Prostate gland (tissue), 2 donors: ENCODE measurements at regions of chr13 and their contacts with region 1.

Region 1: DNA sequence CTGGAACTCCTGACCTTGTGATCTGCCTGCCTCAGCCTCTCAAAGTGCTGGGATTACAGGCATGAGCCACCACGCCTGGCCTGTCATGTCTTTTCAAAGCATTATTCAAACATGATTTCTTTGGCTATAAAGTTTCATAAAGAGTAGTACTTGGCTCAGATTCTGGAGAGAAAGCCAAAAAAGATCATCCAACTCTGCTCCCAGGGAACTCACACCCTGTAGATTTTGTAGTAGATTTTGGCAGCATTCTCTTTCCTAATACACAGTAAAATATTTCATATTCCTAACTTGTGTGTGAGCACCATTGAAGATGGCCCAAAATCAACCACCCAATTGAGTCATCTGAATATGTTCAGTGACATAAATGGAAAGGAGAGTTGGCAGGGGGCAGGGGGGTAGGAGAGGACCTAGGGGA is 48.4 kb downstream of the CAB39L start:
- DNase-seq: peak; percentile 42
- H3K4me3 ChIP-seq: no peak overlapping the region
- H3K27ac ChIP-seq: peak overlapping the region; percentile 36 to 44
- H3K4me1 ChIP-seq: no peaks in the 10 kb centered on the region
- H3K27me3 ChIP-seq: no peaks in the 10 kb centered on the region
- CTCF ChIP-seq: no peak
- POLR2A ChIP-seq: no peak

Region 2: GRCh38 chr13:49307365-49307764 is 88.1 kb before region 1 on chr13:
- intact Hi-C with region 1: loop called (anchors 2 kb)
- DNase-seq: no peak
- H3K4me3 ChIP-seq: no peak overlapping the region
- H3K27ac ChIP-seq: peak overlapping the region; percentile 78 to 81
- H3K4me1 ChIP-seq: peaks cover 9% of the 10 kb centered on the region
- H3K27me3 ChIP-seq: no peaks in the 10 kb centered on the region
- CTCF ChIP-seq: no peak
- POLR2A ChIP-seq: no peak

Region 3: DNA sequence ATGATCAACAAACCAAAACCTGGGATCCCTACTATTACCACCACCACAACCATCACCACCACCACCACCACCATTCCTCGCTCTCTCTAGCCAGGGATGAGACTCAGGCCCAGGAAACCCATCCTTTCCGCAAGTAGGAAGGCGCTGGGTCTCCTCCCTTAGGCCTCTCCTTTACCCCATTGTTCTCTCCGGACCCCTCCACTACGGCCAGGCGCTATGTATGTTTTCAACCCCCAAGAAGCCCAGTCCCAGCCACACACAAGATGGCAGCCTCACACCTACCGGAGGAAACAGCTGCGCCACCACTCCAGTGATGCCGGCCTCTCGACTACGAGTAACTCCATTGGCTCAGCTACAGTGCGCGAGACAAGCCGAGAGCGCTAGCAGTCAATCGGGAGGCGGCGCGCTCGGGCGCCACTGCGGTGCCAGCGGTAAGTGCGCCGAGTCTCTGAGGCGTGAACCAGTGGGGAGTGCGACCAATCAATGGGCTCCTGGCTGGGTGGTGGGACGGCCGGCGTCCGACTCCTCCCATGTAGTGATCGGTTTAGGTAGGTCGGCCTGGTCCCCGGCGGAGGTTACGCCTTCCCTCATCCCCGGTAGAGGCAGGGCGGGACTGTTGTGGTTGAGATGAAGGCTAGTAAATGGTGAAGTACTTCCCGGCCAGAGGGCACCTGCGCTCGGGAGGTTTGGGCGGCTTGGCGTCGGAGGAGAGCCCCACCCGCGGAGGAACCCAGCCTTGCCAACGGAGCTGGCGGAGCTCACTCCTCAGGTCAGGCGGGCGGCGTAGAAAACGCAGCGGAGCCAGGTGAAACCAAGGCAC is 48.5 kb after region 1 on chr13 and contains the starts of genes CAB39L and SETDB2:
- intact Hi-C with region 1: no loop called
- DNase-seq: peak; percentile 100
- H3K4me3 ChIP-seq: peak within 1 kb of the TSS; percentile 69 to 79
- H3K27ac ChIP-seq: peak within 1 kb of the TSS; percentile 93 to 94
- H3K4me1 ChIP-seq: peaks cover 3% of the 10 kb centered on the region
- H3K27me3 ChIP-seq: no peaks in the 10 kb centered on the region
- CTCF ChIP-seq: peak in 2 of 4 experiments; percentile 73 to 79
- POLR2A ChIP-seq: peak; percentile 91
- total RNA-seq, gene CAB39L: 43.9 to 96.5 TPM
- total RNA-seq, gene SETDB2: 9.0 to 17.6 TPM